Sciatic nerve (tissue), 2 donors: ENCODE measurements at regions of chr1 and their contacts with region 1.

Region 1: DNA sequence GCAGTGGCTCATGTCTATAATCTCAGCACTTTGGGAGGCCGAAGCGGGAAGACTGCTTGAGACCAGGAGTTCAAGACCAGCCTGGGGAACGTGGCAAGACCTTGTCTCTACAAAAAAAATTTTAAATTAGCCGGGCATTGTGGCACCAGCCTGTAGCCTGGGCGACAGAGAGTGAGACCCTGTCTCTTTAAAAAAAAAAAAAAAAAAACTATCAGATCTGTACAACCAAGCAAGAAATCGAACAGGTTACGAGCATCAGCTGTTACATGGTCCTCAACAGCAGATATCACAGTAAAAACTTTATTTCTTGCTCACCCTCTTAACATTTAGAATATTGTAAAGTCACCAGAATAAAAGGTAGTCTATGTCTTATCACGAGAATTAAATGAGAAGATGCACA is 1.5 kb downstream of the NUP133 start:
- DNase-seq: no peak
- ATAC-seq: no peak

Region 2: GRCh38 chr1:229526695-229527094 is 20.1 kb after region 1 on chr1:
- intact Hi-C with region 1: loop called (anchors 1 kb)
- DNase-seq: no peak
- ATAC-seq: no peak

Region 3: GRCh38 chr1:229625915-229626831 is 119.5 kb after region 1 on chr1 and contains the starts of genes TAF5L and URB2:
- intact Hi-C with region 1: no loop called
- DNase-seq: peak; percentile 91
- ATAC-seq: peak; percentile 98
- total RNA-seq, gene TAF5L: 15.2 TPM
- total RNA-seq, gene URB2: 8.2 TPM